Dorsolateral prefrontal cortex (tissue), 120 donors: ENCODE measurements at regions of chr4 and their contacts with region 1.

Region 1: DNA sequence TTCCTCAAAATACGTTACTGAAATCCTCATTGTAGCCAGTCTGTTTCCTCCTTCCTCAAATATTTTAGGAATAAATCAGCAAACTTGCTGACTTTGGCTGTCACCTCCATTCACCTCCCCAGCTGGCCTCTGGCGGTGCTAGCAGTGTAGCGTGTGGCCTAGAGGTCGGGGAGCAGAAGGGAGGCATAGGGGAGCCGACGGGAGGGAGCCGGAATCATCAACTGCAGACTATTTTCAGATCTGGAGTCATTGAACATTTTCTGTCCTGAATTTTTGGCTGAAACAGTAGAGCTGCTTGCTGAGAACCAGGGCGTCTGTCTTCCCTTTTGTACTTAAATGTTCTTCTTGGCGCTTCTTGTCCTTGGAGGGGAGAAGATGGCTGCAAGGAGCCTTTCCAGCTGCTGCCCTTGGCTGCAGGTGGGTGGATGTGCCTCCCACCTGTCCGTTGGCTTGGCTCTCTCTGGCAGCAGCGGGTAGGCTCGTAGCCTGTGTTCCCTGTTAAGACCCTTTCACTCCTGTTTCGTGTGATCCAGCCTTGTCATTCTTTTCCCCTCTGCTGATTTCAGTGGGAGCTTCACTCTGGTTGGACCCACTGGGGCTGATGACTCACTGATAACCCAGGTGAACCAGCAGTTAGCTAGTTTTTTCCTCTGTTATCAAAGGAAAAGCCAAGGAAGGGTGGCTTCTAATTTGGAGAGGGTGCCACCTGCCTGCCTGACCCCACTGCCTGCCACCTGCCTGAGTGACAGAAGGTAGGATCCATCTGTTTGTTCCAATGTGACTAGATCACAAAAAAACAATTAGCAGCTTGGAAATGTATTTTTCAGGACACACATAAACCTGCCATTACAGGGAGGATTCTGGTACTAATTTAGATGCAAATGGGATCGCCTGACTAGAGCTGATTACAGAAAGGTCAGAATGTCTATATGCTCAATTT is 135.9 kb downstream of the GATB start:
- DNase-seq: peak in 1 of 10 donors; percentile 86
- H3K4me3 ChIP-seq: peak overlapping the region in 2 of 59 donors; percentile 3 to 24
- H3K27ac ChIP-seq: peak overlapping the region in 56 of 59 donors; percentile 4 to 88 (median 70)
- H3K27me3 ChIP-seq: no peaks in the 10 kb centered on the region
- CTCF ChIP-seq: no peak

Region 2: GRCh38 chr4:151674804-151675391 is 50.0 kb after region 1 on chr4:
- intact Hi-C with region 1: loop called in 1 of 2 experiments (anchors 5 kb)
- DNase-seq: peak in 7 of 10 donors; percentile 49 to 80 (median 71)
- H3K4me3 ChIP-seq: peak overlapping the region; percentile 11 to 69 (median 50)
- H3K27ac ChIP-seq: peak overlapping the region in 58 of 59 donors; percentile 5 to 87 (median 71)
- H3K27me3 ChIP-seq: no peaks in the 10 kb centered on the region
- CTCF ChIP-seq: peak in 3 of 56 donors; percentile 5 to 18 (median 16)